Prostate gland (tissue), 2 donors: ENCODE measurements at regions of chr9 and their contacts with region 1.

Region 1: GRCh38 chr9:119868694-119869093 is 499.5 kb upstream of the BRINP1 start:
- DNase-seq: peak; percentile 94
- H3K4me3 ChIP-seq: no peak overlapping the region
- H3K27ac ChIP-seq: peak overlapping the region; percentile 42 to 46
- H3K4me1 ChIP-seq: peaks cover 4% of the 10 kb centered on the region
- H3K27me3 ChIP-seq: no peaks in the 10 kb centered on the region
- CTCF ChIP-seq: no peak
- POLR2A ChIP-seq: no peak

Region 2: DNA sequence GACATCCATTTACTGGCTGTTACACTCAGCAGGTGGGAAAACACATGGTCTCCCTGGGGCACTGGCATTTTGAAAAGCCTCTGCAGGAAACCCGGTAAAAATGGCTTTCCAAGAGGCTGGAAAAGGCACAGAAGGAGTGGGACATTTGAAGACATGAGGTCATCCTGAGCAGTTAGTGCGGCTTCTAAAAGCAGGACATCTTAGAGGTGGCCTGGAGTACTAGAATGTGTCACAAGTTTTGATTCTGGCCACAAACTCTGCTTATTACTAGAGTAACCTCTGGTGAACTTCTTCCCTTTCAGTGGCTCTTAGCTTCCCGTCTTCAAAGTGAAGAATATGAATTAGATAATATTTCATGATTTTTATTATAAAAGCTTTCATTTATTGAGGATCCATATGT is 76.5 kb before region 1 on chr9:
- intact Hi-C with region 1: loop called (anchors 10 kb)
- DNase-seq: no peak
- H3K4me3 ChIP-seq: no peak overlapping the region
- H3K27ac ChIP-seq: no peak overlapping the region
- H3K4me1 ChIP-seq: no peaks in the 10 kb centered on the region
- H3K27me3 ChIP-seq: no peaks in the 10 kb centered on the region
- CTCF ChIP-seq: no peak
- POLR2A ChIP-seq: no peak

Region 3: GRCh38 chr9:119951090-119951489 is 82.4 kb after region 1 on chr9:
- intact Hi-C with region 1: no loop called
- DNase-seq: no peak
- H3K4me3 ChIP-seq: no peak overlapping the region
- H3K27ac ChIP-seq: peak overlapping the region in 1 of 2 donors; percentile 34
- H3K4me1 ChIP-seq: no peaks in the 10 kb centered on the region
- H3K27me3 ChIP-seq: no peaks in the 10 kb centered on the region
- CTCF ChIP-seq: no peak
- POLR2A ChIP-seq: no peak

Region 4: GRCh38 chr9:119961774-119962424 is 93.2 kb after region 1 on chr9:
- intact Hi-C with region 1: loop called (anchors 5 kb)
- DNase-seq: no peak
- H3K4me3 ChIP-seq: no peak overlapping the region
- H3K27ac ChIP-seq: no peak overlapping the region
- H3K4me1 ChIP-seq: peaks cover 4% of the 10 kb centered on the region
- H3K27me3 ChIP-seq: no peaks in the 10 kb centered on the region
- CTCF ChIP-seq: peak in 2 of 4 experiments; percentile 41
- POLR2A ChIP-seq: no peak

Region 5: DNA sequence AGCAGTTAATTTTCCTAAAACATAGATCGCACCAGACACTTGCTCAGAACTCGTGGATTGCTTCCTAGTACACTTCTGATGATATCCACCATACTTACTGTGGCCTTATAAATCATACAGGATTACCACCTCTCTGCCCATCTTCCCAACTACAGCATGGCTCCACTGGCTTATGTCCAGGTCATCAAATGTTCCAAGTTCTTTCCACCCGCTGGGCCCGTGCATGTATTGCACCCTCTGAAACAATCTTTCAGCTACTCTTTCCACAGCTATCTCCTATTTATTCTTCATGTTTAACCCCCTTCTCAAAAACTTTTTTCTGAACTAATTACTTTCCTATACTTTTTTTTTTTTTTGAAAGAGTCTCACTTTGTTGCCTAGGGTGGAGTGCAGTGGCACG is 906.0 kb after region 1 on chr9:
- intact Hi-C with region 1: no loop called
- DNase-seq: no peak
- H3K4me3 ChIP-seq: no peak overlapping the region
- H3K27ac ChIP-seq: no peak overlapping the region
- H3K4me1 ChIP-seq: peaks cover 18% of the 10 kb centered on the region
- H3K27me3 ChIP-seq: no peaks in the 10 kb centered on the region
- CTCF ChIP-seq: no peak
- POLR2A ChIP-seq: no peak